CD14-positive monocyte (primary cell): ENCODE measurements at regions of chr16 and their contacts with region 1.

Region 1: GRCh38 chr16:87778830-87779579 is 13.2 kb upstream of the KLHDC4 start:
- DNase-seq: peak; percentile 97 to 98 (median 97)
- H3K4me3 ChIP-seq: peak overlapping the region in 1 of 3 experiments; percentile 30
- H3K4me3 Mint-ChIP-seq: peak overlapping the region; percentile 45 to 68
- H3K27ac ChIP-seq: peak overlapping the region; percentile 16 to 68
- H3K27ac Mint-ChIP-seq: peak overlapping the region; percentile 86 to 95 (median 90)
- H3K4me1 ChIP-seq: peaks cover 40 to 44% of the 10 kb centered on the region in 2 donors
- H3K4me1 Mint-ChIP-seq: peaks cover 40% of the 10 kb centered on the region
- H3K27me3 ChIP-seq: no peaks in the 10 kb centered on the region
- H3K27me3 Mint-ChIP-seq: peaks cover 0 to 16% (median 2%) of the 10 kb centered on the region in 3 donors
- CTCF ChIP-seq: peak; percentile 96

Region 2: GRCh38 chr16:87802670-87803069 is 23.7 kb after region 1 on chr16:
- intact Hi-C with region 1: no loop called
- DNase-seq: no peak
- H3K4me3 ChIP-seq: no peak overlapping the region
- H3K4me3 Mint-ChIP-seq: no peak overlapping the region
- H3K27ac ChIP-seq: no peak overlapping the region
- H3K27ac Mint-ChIP-seq: no peak overlapping the region
- H3K4me1 ChIP-seq: peaks cover 16 to 22% of the 10 kb centered on the region in 2 donors
- H3K4me1 Mint-ChIP-seq: peaks cover 25% of the 10 kb centered on the region
- H3K27me3 ChIP-seq: no peaks in the 10 kb centered on the region
- H3K27me3 Mint-ChIP-seq: peaks cover 0 to 9% (median 5%) of the 10 kb centered on the region in 3 donors
- CTCF ChIP-seq: no peak

Region 3: GRCh38 chr16:87874639-87875465 is 95.8 kb after region 1 on chr16:
- intact Hi-C with region 1: loop called (anchors 1 to 2 kb)
- DNase-seq: no peak
- H3K4me3 ChIP-seq: no peak overlapping the region
- H3K4me3 Mint-ChIP-seq: no peak overlapping the region
- H3K27ac ChIP-seq: no peak overlapping the region
- H3K27ac Mint-ChIP-seq: peak overlapping the region in 1 of 7 donors; percentile 50
- H3K4me1 ChIP-seq: peaks cover 17 to 18% of the 10 kb centered on the region in 2 donors
- H3K4me1 Mint-ChIP-seq: peaks cover 17% of the 10 kb centered on the region
- H3K27me3 ChIP-seq: no peaks in the 10 kb centered on the region
- H3K27me3 Mint-ChIP-seq: peaks cover 0 to 8% (median 3%) of the 10 kb centered on the region in 3 donors
- CTCF ChIP-seq: no peak